Thyroid gland (tissue), 4 donors: ENCODE measurements at regions of chr17 and their contacts with region 1.

Region 1: DNA sequence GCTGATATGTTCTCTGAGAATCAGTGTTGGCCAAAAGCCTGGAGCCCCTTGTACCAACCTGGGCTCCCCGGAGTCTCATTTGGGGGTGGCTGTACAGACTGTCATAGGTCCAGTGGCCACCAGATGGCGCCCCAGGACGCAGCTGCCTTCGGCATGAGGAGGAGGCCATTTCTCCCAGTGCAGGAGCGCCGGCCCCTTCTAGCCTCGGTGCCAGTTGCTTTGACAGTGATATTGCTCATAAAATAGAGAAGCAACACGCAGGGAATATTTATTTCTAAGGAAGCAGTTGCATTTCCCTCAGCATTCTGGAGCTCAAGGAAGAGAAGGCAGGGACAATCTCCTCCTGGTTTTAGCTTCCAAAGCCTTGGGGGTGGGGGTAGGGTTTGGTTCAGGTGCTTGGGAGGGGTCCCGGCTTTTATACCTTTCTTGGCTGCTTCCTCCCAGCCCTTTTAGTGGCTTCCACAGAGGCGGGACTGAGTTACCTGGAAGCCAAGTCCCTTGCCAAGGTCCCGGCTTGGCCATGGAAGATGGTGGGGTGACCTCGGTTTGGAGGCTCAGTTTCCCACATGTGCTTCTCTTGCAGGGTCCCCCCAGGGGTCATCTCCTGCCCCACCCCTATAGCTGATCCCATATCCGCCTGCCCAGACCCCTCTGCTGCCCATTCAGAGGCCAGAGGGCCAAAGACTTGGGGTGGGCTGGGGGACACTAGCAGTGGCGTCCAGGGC is 117.8 kb upstream of the CDC42EP4 start:
- DNase-seq: peak; percentile 79 to 87
- H3K4me3 ChIP-seq: no peak overlapping the region
- H3K27ac ChIP-seq: no peak overlapping the region
- H3K4me1 ChIP-seq: peaks cover 0 to 4% of the 10 kb centered on the region in 2 donors
- H3K27me3 ChIP-seq: no peaks in the 10 kb centered on the region
- CTCF ChIP-seq: peak; percentile 81 to 97 (median 94)
- POLR2A ChIP-seq: no peak

Region 2: DNA sequence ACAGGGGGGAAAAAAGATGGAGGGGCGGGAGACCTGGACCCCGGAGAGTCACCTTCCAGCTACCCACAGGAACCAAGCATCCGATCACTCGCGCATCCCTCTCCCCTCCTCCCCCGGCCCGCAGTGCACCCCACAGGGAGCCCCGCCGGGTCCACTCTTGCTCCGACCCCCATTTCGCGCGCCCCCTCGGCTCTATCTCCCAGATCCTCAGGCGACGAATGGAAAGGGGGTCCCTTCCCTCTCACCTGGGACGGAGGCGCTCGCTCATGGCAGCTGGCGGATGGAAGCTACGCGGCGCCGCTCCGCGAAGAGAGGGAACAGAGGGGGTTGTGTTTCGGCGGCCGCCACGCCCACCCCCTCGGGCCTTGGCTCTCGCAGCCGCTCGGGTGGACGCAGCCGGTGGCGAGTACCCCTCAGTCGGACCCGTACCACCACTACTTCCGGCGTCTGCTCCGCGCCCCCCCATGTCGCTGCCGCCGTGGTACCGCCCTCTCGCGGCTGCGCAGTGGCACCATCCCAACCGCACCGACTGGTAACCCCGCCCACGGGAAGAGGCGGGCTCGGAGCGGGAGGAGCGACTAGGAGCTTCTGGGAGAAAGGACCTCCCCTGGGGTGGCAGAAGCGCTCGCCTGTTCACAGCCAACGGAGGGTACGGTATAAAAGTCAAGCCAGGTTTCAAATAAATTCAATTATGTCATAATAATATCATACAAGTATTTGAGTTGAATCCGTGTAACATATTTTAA is 197.6 kb before region 1 on chr17:
- intact Hi-C with region 1: no loop called
- DNase-seq: peak; percentile 95 to 96
- H3K4me3 ChIP-seq: peak overlapping the region; percentile 92 to 94 (median 94)
- H3K27ac ChIP-seq: peak overlapping the region; percentile 64 to 89 (median 84)
- H3K4me1 ChIP-seq: peaks cover 18 to 37% of the 10 kb centered on the region in 2 donors
- H3K27me3 ChIP-seq: no peaks in the 10 kb centered on the region
- CTCF ChIP-seq: peak in 3 of 6 experiments; percentile 16 to 28 (median 17)
- POLR2A ChIP-seq: peak; percentile 42 to 91

Region 3: DNA sequence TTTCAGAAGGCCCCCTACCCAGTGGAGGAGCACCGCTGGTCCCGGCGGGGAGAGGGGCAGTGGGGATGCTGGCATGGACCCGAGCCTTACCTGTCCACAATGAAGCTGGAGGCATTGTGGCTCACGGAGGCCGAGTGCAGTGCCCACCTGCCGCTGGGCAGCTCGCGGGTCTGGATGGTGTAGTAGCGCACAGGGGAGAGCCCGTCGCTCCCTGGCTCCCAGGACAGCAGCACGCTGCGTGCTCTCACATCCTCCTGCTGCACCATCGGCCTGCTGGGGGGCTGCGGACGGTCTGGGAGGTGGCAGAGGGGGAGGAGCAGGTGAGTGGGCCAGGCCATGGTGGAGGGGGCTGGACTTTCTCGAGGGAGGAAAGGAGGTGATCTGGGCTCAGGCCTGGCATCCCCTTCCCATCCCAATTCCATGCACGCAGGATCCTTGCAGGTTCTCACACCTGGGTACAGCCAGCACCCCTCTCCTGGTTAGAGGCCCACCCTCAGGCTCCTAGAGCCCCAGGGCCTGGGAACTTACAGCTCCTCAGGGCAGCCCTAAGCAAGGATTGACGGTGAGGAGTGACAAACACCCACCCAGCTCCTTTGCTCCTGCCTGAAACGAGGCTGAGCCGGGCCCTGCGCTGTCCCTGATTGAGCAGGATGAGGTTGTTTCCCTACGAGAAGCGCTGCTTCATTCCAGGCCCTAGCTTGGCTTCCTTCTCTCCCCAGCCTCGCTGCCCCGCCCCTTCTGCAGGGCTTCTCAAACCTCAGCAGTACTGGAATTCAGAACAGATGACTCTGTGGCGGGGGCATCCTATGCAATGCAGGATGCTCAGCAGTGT is 41.6 kb before region 1 on chr17:
- intact Hi-C with region 1: no loop called
- DNase-seq: no peak
- H3K4me3 ChIP-seq: no peak overlapping the region
- H3K27ac ChIP-seq: no peak overlapping the region
- H3K4me1 ChIP-seq: no peaks in the 10 kb centered on the region
- H3K27me3 ChIP-seq: no peaks in the 10 kb centered on the region
- CTCF ChIP-seq: no peak
- POLR2A ChIP-seq: no peak

Region 4: GRCh38 chr17:73669771-73670170 is 240.2 kb after region 1 on chr17:
- intact Hi-C with region 1: no loop called
- DNase-seq: no peak
- H3K4me3 ChIP-seq: no peak overlapping the region
- H3K27ac ChIP-seq: no peak overlapping the region
- H3K4me1 ChIP-seq: peaks cover 0 to 8% of the 10 kb centered on the region in 2 donors
- H3K27me3 ChIP-seq: no peaks in the 10 kb centered on the region
- CTCF ChIP-seq: no peak
- POLR2A ChIP-seq: no peak

Region 5: GRCh38 chr17:74176546-74177001 is 747.0 kb after region 1 on chr17:
- intact Hi-C with region 1: loop called (anchors 5 kb)
- DNase-seq: peak; percentile 53 to 57
- H3K4me3 ChIP-seq: no peak overlapping the region
- H3K27ac ChIP-seq: no peak overlapping the region
- H3K4me1 ChIP-seq: no peaks in the 10 kb centered on the region
- H3K27me3 ChIP-seq: no peaks in the 10 kb centered on the region
- CTCF ChIP-seq: peak; percentile 28 to 86 (median 70)
- POLR2A ChIP-seq: no peak